Activated naive CD8-positive, alpha-beta T cell treated with anti-CD3 and anti-CD28 coated beads, Interleukin-2, amount 10 ng/mL, durations not matched to agents 7 days and 5 days (primary cell): ENCODE measurements at regions of chr13 and their contacts with region 1.

Region 1: DNA sequence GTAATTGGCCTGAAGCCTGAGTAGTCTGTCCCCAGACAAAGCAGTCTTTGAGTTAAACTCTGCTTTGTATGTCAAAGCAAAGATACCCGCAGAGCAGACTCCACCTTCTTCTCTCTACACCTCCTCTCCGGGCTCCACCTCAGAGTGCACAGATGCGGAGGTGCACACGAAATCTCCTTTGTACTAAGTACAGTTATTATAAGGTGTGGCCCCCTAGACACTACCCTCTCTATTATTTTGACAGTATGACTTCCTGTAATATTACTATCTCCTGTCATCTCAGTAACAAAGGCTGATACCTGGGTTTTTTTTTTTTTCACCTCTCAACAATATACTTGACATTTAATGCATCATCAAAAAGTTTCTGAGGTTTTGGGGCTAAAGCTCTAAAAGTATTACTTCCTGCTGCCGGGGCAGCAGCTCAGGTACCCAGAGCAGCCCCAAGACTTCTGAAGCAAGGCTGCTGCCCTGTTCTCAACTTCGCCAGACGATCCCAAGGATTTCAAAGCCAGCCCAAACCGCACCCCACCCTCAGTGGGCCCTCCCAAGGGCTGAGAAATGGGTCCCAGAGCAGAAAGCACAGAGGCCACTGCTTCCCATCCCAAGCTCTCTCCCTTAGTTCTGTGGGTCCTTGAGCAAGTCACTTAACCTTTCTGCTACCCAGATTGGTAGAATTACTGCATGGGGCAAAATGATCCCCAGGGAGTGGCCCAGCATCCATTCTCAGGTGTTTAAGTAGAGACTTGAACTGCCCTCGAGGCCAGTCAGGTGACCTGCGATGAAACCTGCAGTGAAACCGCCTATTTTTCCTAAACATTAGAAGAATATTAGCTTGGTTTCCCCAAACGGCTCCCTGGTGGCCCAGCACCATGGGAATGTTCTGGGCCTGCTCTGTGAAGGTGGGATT is 180.6 kb downstream of the FOXO1 start:
- DNase-seq: peak; percentile 67
- ATAC-seq: peak; percentile 91
- H3K4me3 Mint-ChIP-seq: peak overlapping the region; percentile 43
- H3K27ac Mint-ChIP-seq: peak overlapping the region; percentile 89
- H3K4me1 Mint-ChIP-seq: peaks cover 55% of the 10 kb centered on the region
- H3K27me3 Mint-ChIP-seq: no peaks in the 10 kb centered on the region

Region 2: GRCh38 chr13:40388617-40389016 is 97.2 kb before region 1 on chr13:
- POLR2A ChIA-PET with region 1: interaction called, 20 read pairs
- DNase-seq: peak; percentile 77
- ATAC-seq: peak; percentile 98
- H3K4me3 Mint-ChIP-seq: peak overlapping the region; percentile 83
- H3K27ac Mint-ChIP-seq: peak overlapping the region; percentile 98
- H3K4me1 Mint-ChIP-seq: peaks cover 52% of the 10 kb centered on the region
- H3K27me3 Mint-ChIP-seq: no peaks in the 10 kb centered on the region

Region 3: GRCh38 chr13:40438999-40439797 is 46.7 kb before region 1 on chr13:
- POLR2A ChIA-PET with region 1: interaction called, 11 read pairs
- DNase-seq: no peak
- ATAC-seq: peak; percentile 69
- H3K4me3 Mint-ChIP-seq: peak overlapping the region; percentile 72
- H3K27ac Mint-ChIP-seq: peak overlapping the region; percentile 59
- H3K4me1 Mint-ChIP-seq: peaks cover 31% of the 10 kb centered on the region
- H3K27me3 Mint-ChIP-seq: no peaks in the 10 kb centered on the region

Region 4: GRCh38 chr13:40619479-40619814 is 133.6 kb after region 1 on chr13:
- POLR2A ChIA-PET with region 1: no interaction called
- DNase-seq: no peak
- ATAC-seq: no peak
- H3K4me3 Mint-ChIP-seq: no peak overlapping the region
- H3K27ac Mint-ChIP-seq: peak overlapping the region; percentile 7
- H3K4me1 Mint-ChIP-seq: peaks cover 64% of the 10 kb centered on the region
- H3K27me3 Mint-ChIP-seq: no peaks in the 10 kb centered on the region